CD8-positive, alpha-beta T cell (primary cell): ENCODE measurements at regions of chr9 and their contacts with region 1.

Region 1: DNA sequence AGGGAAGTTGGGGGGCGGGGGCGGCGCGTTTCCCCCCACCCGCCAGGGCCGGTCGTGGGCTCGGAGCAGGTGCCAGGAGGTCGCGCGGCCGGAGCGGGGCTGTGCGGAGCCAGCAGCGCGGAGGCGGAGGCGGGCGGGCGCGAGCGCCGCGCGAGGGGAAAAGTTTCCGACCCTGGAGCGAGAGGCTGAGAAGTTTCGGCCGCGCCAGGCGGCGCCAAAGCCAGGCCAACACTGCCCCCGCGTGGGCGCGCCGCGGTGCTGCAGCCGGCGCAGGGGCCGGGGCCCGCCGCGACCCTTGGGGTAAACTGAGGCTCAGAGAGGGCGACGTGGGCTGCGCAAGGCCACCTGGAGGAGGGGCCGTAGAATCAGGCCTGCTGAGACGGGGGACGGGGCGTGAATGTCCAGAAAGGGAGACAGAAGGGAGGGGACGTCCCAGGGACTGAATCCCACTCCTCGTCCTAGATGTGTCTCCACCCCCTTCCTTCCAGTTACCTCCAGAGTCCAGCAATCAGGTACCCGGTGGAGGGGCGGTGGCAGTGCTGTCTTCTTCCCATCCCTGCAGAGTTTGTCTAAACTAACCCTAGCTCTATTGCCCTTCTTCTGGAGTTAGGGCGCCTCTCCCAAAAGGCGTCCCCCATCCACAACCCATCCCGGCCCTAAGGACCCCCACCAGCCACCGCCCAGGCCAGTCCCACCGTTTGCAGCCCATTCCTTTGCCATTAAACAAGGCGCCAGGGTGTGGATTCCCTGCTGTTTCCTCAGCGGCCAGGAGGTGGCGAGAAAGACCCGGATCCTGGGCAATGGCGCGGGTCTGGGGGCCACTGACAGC is 10.2 kb downstream of the C9orf50 start:
- DNase-seq: peak; percentile 50 to 85 (median 75)
- ATAC-seq: peak; percentile 57
- H3K4me3 ChIP-seq: peak overlapping the region; percentile 36 to 77
- H3K4me3 Mint-ChIP-seq: peak overlapping the region; percentile 76
- H3K27ac ChIP-seq: no peak overlapping the region
- H3K27ac Mint-ChIP-seq: peak overlapping the region; percentile 69
- H3K4me1 ChIP-seq: peaks cover 25% of the 10 kb centered on the region
- H3K4me1 Mint-ChIP-seq: peaks cover 29% of the 10 kb centered on the region
- H3K27me3 ChIP-seq: no peaks in the 10 kb centered on the region
- H3K27me3 Mint-ChIP-seq: no peaks in the 10 kb centered on the region
- CTCF ChIP-seq: peak; percentile 93

Region 2: GRCh38 chr9:129320575-129321263 is 290.0 kb before region 1 on chr9:
- CTCF ChIA-PET with region 1: interaction called, 5 read pairs
- POLR2A ChIA-PET with region 1: interaction called, 3 read pairs
- intact Hi-C with region 1: loop called (anchors 1 kb)
- DNase-seq: peak; percentile 15 to 85 (median 53)
- ATAC-seq: peak; percentile 92
- H3K4me3 ChIP-seq: peak overlapping the region; percentile 39 to 57
- H3K4me3 Mint-ChIP-seq: peak overlapping the region; percentile 80
- H3K27ac ChIP-seq: peak overlapping the region in 1 of 2 experiments; percentile 31
- H3K27ac Mint-ChIP-seq: peak overlapping the region; percentile 90
- H3K4me1 ChIP-seq: peaks cover 22% of the 10 kb centered on the region
- H3K4me1 Mint-ChIP-seq: peaks cover 11% of the 10 kb centered on the region
- H3K27me3 ChIP-seq: peaks cover 0 to 2% of the 10 kb centered on the region in 2 experiments
- H3K27me3 Mint-ChIP-seq: no peaks in the 10 kb centered on the region
- CTCF ChIP-seq: peak; percentile 51

Region 3: GRCh38 chr9:129413537-129414376 is 196.9 kb before region 1 on chr9:
- CTCF ChIA-PET with region 1: interaction called, 3 read pairs
- POLR2A ChIA-PET with region 1: no interaction called
- intact Hi-C with region 1: loop called in 1 of 2 experiments (anchors 1 kb)
- DNase-seq: peak; percentile 97 to 100 (median 99)
- ATAC-seq: peak; percentile 76
- H3K4me3 ChIP-seq: peak overlapping the region; percentile 56 to 87
- H3K4me3 Mint-ChIP-seq: peak overlapping the region; percentile 87
- H3K27ac ChIP-seq: peak overlapping the region; percentile 99
- H3K27ac Mint-ChIP-seq: peak overlapping the region; percentile 99
- H3K4me1 ChIP-seq: peaks cover 27% of the 10 kb centered on the region
- H3K4me1 Mint-ChIP-seq: peaks cover 33% of the 10 kb centered on the region
- H3K27me3 ChIP-seq: no peaks in the 10 kb centered on the region
- H3K27me3 Mint-ChIP-seq: no peaks in the 10 kb centered on the region
- CTCF ChIP-seq: no peak

Region 4: GRCh38 chr9:129495534-129496325 is 115.0 kb before region 1 on chr9:
- CTCF ChIA-PET with region 1: interaction called, 3 read pairs
- POLR2A ChIA-PET with region 1: no interaction called
- intact Hi-C with region 1: loop called in 1 of 2 experiments (anchors 10 kb)
- DNase-seq: peak; percentile 66 to 89 (median 82)
- ATAC-seq: peak; percentile 89
- H3K4me3 ChIP-seq: peak overlapping the region; percentile 75 to 77
- H3K4me3 Mint-ChIP-seq: peak overlapping the region; percentile 82
- H3K27ac ChIP-seq: peak overlapping the region in 1 of 2 experiments; percentile 38
- H3K27ac Mint-ChIP-seq: peak overlapping the region; percentile 37
- H3K4me1 ChIP-seq: peaks cover 25% of the 10 kb centered on the region
- H3K4me1 Mint-ChIP-seq: peaks cover 25% of the 10 kb centered on the region
- H3K27me3 ChIP-seq: no peaks in the 10 kb centered on the region
- H3K27me3 Mint-ChIP-seq: no peaks in the 10 kb centered on the region
- CTCF ChIP-seq: no peak

Region 5: GRCh38 chr9:129783516-129784361 is 173.1 kb after region 1 on chr9:
- CTCF ChIA-PET with region 1: interaction called, 4 read pairs
- POLR2A ChIA-PET with region 1: no interaction called
- intact Hi-C with region 1: loop called in 1 of 2 experiments (anchors 10 kb)
- DNase-seq: peak; percentile 55 to 81 (median 73)
- ATAC-seq: peak; percentile 100
- H3K4me3 ChIP-seq: no peak overlapping the region
- H3K4me3 Mint-ChIP-seq: no peak overlapping the region
- H3K27ac ChIP-seq: no peak overlapping the region
- H3K27ac Mint-ChIP-seq: no peak overlapping the region
- H3K4me1 ChIP-seq: no peaks in the 10 kb centered on the region
- H3K4me1 Mint-ChIP-seq: peaks cover 4% of the 10 kb centered on the region
- H3K27me3 ChIP-seq: peaks cover 0 to 3% of the 10 kb centered on the region in 2 experiments
- H3K27me3 Mint-ChIP-seq: peaks cover 5% of the 10 kb centered on the region
- CTCF ChIP-seq: peak; percentile 84

Region 6: DNA sequence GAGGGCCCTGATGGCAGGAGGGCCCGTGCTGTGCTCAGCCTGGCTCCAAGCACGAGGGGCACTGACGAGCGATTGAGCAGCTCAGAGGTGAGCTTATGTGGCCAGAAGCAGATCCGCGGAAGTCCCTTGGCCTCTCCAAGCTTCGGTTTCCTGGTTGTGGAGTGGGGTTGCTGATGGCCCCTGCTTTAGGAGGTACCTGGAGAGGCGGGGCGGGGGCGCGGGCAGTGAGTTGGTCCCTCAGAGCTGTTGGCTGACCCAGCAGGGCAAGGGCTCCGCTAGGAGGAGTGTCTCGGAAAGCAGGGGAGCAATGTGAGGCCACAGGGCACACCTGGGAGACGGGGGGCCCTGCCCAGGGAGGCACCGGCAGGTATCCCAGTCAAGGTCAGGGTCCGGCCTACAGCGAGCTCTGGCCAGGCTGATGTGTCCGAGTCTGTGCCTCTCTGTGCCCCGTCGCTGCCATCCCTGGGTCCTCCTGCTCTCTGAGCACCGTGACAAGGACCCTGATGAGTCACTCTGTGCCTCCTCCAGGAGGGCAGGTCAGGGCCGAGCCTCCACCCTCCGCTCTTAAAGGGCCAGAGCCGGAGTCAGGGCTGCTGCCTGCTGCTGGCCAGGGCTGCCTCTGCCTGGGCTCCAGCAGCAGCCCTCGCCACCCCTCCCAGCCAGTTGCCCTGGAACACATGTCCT is 576.3 kb after region 1 on chr9:
- CTCF ChIA-PET with region 1: no interaction called
- POLR2A ChIA-PET with region 1: no interaction called
- intact Hi-C with region 1: no loop called
- DNase-seq: peak in 1 of 9 experiments; percentile 14
- ATAC-seq: no peak
- H3K4me3 ChIP-seq: no peak overlapping the region
- H3K4me3 Mint-ChIP-seq: no peak overlapping the region
- H3K27ac ChIP-seq: no peak overlapping the region
- H3K27ac Mint-ChIP-seq: no peak overlapping the region
- H3K4me1 ChIP-seq: no peaks in the 10 kb centered on the region
- H3K4me1 Mint-ChIP-seq: no peaks in the 10 kb centered on the region
- H3K27me3 ChIP-seq: no peaks in the 10 kb centered on the region
- H3K27me3 Mint-ChIP-seq: no peaks in the 10 kb centered on the region
- CTCF ChIP-seq: no peak